ENCODE measurements at regions of chr1 and their contacts with region 1.

Region 1: DNA sequence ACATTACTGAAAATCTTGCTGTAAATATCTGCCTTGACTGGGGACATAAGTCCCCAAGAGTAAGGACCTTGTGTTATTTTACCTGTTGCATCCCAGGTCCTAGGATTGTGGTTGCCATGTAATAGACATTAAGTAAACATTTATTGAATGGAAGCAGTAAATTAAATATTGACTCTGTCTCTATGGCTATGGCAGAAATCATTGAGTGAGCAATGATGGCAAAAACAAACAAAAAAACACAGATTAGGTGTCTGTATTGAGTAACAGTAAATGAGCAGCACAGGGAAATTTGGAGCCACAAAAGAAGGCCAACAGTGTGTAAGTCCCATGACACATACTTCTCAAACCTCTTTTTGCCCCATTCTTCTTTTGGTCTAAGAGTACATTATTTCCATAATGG is 240.4 kb downstream of the NFIA start:
- DNase-seq: peak; percentile 92
- ATAC-seq: peak; percentile 78
- H3K4me3 ChIP-seq: peak overlapping the region; percentile 46; the same call in 1 of the 2 replicates
- H3K27ac ChIP-seq: peak overlapping the region; percentile 94
- H3K4me1 ChIP-seq: peaks cover 43% of the 10 kb centered on the region
- H3K27me3 ChIP-seq: no peaks in the 10 kb centered on the region
- CTCF ChIP-seq: no peak

Region 2: DNA sequence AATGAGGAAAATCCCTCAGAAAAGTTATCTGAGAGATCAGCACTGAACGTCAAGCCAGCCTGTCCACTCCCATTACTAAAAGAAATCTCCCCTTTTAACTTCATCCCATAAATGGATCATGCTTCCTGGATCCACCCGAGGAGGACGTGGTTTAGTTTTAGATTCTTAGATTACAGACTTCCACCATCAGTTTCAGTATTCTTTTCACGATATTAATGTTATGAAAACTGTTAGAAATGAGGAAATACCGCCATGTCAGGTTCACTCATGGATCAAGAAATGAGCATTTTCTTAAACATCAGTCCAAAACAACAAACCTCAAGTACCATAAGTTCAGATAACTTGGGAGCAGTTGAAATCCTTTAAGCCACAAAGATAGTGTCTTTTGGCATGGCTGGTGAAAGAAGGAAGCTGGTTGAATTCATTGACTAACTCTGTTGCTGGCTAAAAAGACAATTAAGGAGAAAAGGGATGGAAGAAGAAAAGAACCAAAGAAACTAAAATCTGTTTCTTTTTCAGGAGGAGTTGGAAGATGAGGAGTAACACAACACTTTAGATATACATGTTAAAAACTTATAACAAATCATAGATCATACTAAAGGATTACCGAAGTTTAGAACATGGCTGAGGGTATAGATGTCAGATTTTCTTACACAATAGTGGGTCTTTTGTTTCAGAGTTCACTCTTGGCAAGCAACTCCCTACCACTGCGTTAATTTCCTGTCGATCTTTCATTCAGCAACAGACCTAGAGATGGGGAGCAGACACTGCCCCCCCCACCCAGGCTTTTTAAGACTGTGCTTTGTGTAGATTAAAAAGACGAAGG is 190.4 kb before region 1 on chr1:
- CTCF ChIA-PET with region 1: no interaction called
- POLR2A ChIA-PET with region 1: no interaction called
- intact Hi-C with region 1: loop called (anchors 2 kb)
- DNase-seq: no peak
- ATAC-seq: no peak; the same call in 1 of the 2 replicates
- H3K4me3 ChIP-seq: no peak overlapping the region
- H3K27ac ChIP-seq: peak overlapping the region; percentile 48
- H3K4me1 ChIP-seq: peaks cover 14% of the 10 kb centered on the region
- H3K27me3 ChIP-seq: no peaks in the 10 kb centered on the region
- CTCF ChIP-seq: no peak

Region 3: GRCh38 chr1:61141288-61142042 is 181.3 kb before region 1 on chr1:
- CTCF ChIA-PET with region 1: no interaction called
- POLR2A ChIA-PET with region 1: no interaction called
- intact Hi-C with region 1: loop called (anchors 2 kb)
- DNase-seq: peak; percentile 68
- ATAC-seq: peak; percentile 51
- H3K4me3 ChIP-seq: peak overlapping the region; percentile 4; the same call in 1 of the 2 replicates
- H3K27ac ChIP-seq: peak overlapping the region; percentile 82
- H3K4me1 ChIP-seq: peaks cover 58% of the 10 kb centered on the region
- H3K27me3 ChIP-seq: no peaks in the 10 kb centered on the region
- CTCF ChIP-seq: no peak

Region 4: GRCh38 chr1:61293986-61294504 is 28.7 kb before region 1 on chr1:
- CTCF ChIA-PET with region 1: no interaction called
- POLR2A ChIA-PET with region 1: no interaction called
- intact Hi-C with region 1: loop called (anchors 1 kb)
- DNase-seq: peak; percentile 80
- ATAC-seq: peak; percentile 83
- H3K4me3 ChIP-seq: no peak overlapping the region
- H3K27ac ChIP-seq: peak overlapping the region; percentile 80
- H3K4me1 ChIP-seq: peaks cover 42% of the 10 kb centered on the region
- H3K27me3 ChIP-seq: no peaks in the 10 kb centered on the region
- CTCF ChIP-seq: no peak

Region 5: DNA sequence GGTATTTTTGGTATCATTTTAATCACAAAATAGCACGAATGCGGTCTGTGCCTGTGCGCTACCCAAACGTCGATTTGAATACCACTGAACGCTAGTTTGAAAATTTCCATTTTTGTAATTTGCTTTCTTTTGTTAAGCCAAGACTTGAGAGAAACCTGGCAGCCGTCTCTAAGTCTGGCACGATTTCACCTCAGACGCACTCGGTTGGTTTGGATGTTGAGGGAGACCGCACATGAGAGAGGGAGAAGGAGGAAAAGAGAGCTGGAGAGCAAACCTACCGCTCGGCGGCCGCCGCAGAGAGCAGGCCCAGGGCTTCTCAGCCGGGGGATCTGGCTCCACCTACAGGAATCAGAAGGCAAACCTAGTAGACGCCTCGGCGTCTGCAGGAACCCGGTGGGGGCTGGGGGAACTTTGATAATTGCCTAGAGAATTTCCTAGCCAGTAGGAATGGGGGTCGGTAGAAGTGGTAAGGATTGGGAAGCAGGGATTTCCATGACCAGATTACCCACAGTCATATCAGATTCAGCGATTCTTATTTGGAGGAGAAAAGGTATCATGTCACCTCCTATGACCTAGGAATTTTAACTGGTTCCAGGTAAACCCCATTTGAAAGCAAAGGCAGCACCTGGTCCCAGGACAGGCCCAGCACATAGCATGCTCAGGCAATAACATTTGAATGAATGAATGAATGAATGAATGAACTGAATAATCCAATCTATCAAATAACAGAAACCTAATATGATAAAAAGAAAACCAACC is 319.0 kb after region 1 on chr1:
- CTCF ChIA-PET with region 1: no interaction called
- POLR2A ChIA-PET with region 1: no interaction called
- intact Hi-C with region 1: loop called (anchors 10 kb)
- DNase-seq: peak; percentile 71
- ATAC-seq: peak; percentile 98
- H3K4me3 ChIP-seq: no peak overlapping the region
- H3K27ac ChIP-seq: no peak overlapping the region
- H3K4me1 ChIP-seq: no peaks in the 10 kb centered on the region
- H3K27me3 ChIP-seq: no peaks in the 10 kb centered on the region
- CTCF ChIP-seq: peak; percentile 78

Measured in PC-3 (cell line).